HEK293T (cell line): ENCODE measurements at regions of chr6 and their contacts with region 1.

Region 1: DNA sequence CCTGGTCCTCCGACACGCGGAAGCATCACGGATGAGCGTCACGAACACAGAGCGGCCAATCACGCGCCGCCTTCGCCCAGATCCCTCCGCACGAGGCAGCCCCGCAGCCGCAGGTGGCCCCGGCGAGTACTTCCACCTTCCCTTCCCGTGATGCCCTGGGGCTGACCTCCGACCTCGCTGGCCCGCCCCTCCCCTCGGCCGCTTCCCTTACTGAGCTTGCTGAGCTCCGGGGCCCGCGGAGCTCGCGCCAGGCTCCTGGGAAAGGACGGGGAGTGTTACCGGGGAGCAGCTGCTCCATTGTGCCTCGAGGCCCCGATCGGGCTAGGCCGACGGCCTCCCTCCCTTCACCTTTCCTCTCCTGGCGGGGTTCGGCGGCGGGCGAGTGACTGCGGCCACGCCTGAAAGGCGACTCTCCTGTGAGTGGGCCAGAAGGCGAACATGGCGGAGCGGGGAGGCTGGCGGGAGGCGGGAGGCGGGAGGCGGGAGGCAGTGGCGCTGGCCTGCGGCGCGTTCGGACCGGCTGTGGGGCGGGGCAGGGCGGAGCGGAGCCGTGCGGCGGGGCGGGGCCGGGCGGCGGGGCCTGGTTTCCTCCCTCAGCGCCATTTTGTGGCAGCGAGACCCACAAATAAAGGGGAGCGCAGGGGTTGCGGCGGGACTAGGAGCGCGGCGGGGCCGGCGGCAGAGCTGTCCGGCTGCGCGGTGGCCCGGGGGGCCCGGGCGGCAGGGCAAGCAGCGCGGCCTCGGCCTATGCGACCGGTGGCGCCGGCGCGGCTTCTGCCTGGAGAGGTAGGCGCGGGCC is at the start of gene WTAP:
- DNase-seq: peak; percentile 93

Region 2: GRCh38 chr6:159693128-159693893 is 33.8 kb before region 1 on chr6 and contains the start of gene SOD2:
- CTCF ChIA-PET with region 1: interaction called, 3 read pairs
- POLR2A ChIA-PET with region 1: interaction called, 25 read pairs
- DNase-seq: peak; percentile 91

Region 3: DNA sequence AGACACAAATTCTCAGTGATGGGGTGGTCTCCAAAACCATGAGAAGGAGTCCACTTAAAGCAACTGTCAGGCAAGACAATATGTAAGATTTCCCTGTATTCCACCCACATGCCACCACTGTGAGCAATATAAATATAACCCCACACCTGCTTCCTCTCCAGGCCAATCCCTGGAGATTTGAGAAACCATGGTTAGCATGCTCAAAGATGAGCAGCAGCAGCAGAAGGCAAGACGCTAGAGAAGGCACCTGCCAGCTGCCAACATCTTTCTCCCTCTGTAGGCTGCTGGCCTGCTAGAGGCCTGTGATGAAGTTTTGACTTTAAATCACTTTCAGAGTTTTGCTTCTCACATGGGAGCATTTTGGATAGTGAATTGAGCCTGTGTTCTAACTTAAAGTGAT is 26.1 kb before region 1 on chr6:
- CTCF ChIA-PET with region 1: no interaction called
- POLR2A ChIA-PET with region 1: interaction called, 13 read pairs
- DNase-seq: no peak

Region 4: DNA sequence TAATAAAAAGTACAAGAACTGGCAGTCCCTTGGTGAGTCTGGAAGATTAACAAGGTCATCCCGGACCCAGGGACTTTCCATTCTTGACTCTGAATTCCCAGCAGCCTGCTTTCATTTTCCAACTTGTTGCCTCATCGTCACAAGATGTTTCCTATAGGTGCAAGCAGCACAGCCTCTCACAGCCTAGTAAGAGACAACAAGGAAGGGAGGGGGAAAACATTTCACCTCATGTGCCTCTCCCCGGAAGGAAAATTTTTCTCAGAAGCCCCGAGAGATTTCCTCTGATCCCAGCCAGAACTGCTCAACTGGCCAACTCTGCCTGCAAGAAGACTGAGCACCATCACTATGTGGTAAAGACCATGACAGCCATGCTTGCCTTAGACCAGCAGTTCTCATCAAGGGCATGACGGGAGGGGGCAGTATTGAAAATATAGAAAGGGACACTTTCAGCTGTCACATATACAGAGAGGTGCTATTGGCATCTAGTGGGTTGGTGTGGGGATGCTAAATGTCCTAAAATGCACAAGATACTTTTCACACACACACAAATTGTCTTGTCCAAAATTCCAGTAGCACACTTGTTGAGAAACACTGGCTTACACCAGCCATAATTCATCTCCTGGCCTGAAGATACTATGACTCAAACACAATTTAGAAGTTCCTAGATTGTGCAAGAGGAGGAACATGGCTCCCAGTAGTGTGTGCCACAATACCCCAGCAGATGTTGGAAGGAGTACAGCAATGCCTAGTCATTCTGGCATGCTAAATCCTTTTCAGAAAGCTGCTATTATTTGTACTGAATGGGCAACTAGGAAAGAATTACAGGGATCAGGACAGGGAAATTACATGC is 10.6 kb before region 1 on chr6:
- CTCF ChIA-PET with region 1: interaction called, 5 read pairs
- POLR2A ChIA-PET with region 1: interaction called, 13 read pairs
- DNase-seq: no peak

Region 5: DNA sequence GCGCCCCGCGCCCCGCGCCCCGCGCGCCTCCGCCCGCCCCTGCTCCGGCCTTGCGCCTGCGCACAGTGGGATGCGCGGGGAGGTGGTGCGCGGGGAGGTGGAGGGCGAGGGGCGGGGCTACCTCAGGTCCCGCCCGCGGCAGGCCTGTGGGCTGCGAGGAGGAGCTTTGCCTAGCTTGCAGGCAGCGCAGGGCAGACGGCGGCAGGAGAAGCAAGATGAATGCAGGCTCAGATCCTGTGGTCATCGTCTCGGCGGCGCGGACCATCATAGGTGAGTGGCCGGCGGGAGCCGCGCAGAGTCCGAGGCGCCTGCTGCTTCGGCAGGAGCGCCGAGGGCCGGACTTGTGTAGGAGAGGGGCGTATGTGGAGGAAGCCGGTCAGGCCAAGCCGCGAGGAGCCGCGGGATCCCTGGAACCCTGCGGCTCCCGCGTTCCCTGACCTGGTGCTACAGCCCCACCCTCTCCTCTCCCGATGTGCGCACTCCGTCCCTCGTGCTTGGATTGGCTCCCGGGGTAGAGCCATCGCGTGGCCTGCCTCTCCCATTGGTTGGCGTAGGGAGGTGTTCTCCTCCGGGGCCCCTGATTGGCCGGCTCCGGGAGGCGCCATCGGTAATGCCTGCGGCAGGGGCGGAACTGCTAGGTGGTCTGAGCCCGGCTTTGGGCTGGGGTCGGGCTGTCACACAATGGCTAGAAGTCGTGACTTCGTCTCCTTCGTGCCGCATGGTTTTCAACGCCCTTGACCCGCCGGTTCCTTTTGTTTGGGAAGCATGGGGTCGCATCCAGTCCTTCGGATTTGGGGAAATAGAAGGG is 35.0 kb after region 1 on chr6 and contains the start of gene ACAT2:
- CTCF ChIA-PET with region 1: interaction called, 4 read pairs
- POLR2A ChIA-PET with region 1: interaction called, 54 read pairs
- DNase-seq: peak; percentile 99

Region 6: GRCh38 chr6:159789377-159790148 is 62.4 kb after region 1 on chr6 and contains the start of gene TCP1:
- CTCF ChIA-PET with region 1: no interaction called
- POLR2A ChIA-PET with region 1: interaction called, 97 read pairs
- DNase-seq: peak; percentile 97

Region 7: DNA sequence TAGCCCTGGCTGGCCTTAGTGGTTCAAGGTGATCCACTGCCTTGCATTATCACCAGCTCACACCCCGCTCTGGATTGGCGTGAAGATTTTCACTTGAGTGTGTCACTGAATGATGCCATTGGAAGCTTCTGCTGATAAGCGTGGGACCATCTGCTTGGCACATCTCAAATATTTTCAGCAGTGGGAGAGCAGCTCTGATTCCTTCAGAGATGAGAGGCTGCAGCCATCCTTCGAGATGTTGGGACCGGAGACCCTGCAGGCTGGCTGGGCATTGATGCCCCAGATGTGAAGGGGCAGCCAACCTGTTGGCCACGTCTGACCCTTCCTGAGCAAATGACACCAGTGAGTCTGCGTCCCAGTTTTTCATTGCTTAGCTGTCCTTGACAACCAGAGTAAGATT is 163.7 kb after region 1 on chr6 and contains the start of gene MAS1:
- CTCF ChIA-PET with region 1: no interaction called
- POLR2A ChIA-PET with region 1: no interaction called
- DNase-seq: no peak